ENCODE measurements at regions of chr3 and their contacts with region 1.

Region 1: DNA sequence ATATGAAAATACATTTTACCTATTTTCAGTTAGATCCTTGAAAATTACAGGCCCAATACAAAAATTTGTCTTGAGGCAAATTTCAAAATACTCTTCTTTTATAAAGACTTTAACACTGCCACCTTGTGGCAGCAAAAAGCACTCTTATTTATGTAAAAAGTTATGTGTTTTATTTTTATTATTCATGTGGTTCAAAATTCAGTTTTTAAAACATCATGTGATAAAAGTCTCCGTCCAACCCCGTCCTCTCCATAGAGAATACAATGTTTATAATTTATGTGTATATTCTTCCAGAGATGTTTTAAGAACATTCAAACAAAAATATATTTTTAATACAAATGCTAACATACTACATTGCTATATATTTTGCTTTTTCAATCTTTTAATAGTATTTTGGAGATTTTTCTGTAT is 36.9 kb upstream of the TRIM59 start:
- DNase-seq: peak; percentile 64
- H3K4me3 Mint-ChIP-seq: no peak overlapping the region
- H3K27ac Mint-ChIP-seq: no peak overlapping the region
- H3K4me1 Mint-ChIP-seq: peaks cover 6% of the 10 kb centered on the region
- H3K27me3 Mint-ChIP-seq: peaks cover 2% of the 10 kb centered on the region

Region 2: GRCh38 chr3:159884661-159885402 is 601.6 kb before region 1 on chr3:
- intact Hi-C with region 1: loop called (anchors 1 kb)
- DNase-seq: peak; percentile 62
- H3K4me3 Mint-ChIP-seq: no peak overlapping the region
- H3K27ac Mint-ChIP-seq: no peak overlapping the region
- H3K4me1 Mint-ChIP-seq: no peaks in the 10 kb centered on the region
- H3K27me3 Mint-ChIP-seq: peaks cover 25% of the 10 kb centered on the region

Region 3: GRCh38 chr3:160027541-160028195 is 458.8 kb before region 1 on chr3:
- intact Hi-C with region 1: loop called (anchors 2 kb)
- DNase-seq: peak; percentile 77
- H3K4me3 Mint-ChIP-seq: peak overlapping the region; percentile 27
- H3K27ac Mint-ChIP-seq: peak overlapping the region; percentile 92
- H3K4me1 Mint-ChIP-seq: peaks cover 22% of the 10 kb centered on the region
- H3K27me3 Mint-ChIP-seq: no peaks in the 10 kb centered on the region

Region 4: GRCh38 chr3:160163229-160163878 is 323.1 kb before region 1 on chr3:
- intact Hi-C with region 1: loop called (anchors 1 kb)
- DNase-seq: no peak
- H3K4me3 Mint-ChIP-seq: no peak overlapping the region
- H3K27ac Mint-ChIP-seq: no peak overlapping the region
- H3K4me1 Mint-ChIP-seq: no peaks in the 10 kb centered on the region
- H3K27me3 Mint-ChIP-seq: peaks cover 20% of the 10 kb centered on the region

Region 5: DNA sequence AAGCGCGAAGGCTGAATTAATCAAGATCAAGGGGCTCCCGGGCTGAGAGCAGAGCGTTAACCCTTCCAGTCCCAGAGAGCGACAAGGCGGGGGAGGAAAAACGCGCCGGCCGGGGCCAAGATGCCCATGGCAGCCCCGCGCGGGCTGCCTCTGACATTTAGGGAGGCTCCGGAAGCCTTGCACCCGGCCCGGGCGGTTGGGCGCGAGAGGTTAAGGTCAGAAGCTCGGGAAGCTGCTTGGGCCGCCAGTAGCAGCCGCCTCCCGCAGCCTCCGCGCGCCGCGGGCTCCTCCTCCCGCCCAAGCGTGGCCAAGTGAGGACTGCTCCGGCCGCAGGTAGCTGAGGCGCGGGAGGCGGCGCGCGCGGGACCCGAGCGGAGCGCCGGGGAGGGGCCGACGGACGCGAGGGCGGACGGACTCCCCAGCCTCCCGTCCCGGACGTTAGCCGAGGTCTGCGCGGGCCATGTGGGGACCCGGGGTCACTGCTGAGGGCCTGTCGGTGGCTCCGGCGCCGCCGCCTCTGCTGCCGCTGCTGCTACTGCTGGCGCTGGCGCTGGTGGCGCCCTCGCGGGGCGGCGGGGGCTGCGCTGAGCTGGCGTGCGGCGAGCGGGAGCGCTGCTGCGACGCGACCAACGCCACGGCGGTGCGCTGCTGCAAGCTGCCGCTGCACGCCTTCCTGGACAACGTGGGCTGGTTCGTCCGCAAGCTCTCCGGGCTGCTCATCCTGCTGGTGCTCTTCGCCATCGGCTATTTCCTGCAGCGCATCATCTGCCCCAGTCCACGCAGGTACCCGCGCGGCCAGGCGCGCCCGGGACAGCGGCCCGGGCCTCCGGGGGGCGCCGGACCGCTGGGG is 261.1 kb before region 1 on chr3 and contains the start of gene C3orf80:
- intact Hi-C with region 1: loop called (anchors 5 kb)
- DNase-seq: peak; percentile 85
- H3K4me3 Mint-ChIP-seq: peak within 1 kb of the TSS; percentile 84
- H3K27ac Mint-ChIP-seq: peak within 1 kb of the TSS; percentile 20
- H3K4me1 Mint-ChIP-seq: peaks cover 16% of the 10 kb centered on the region
- H3K27me3 Mint-ChIP-seq: peaks cover 61% of the 10 kb centered on the region
- total RNA-seq, gene C3orf80: 0.07 TPM in 1 of 2 replicates, not detected in the other

Region 6: GRCh38 chr3:160449636-160450598 is 36.5 kb before region 1 on chr3 and contains the start of gene TRIM59:
- intact Hi-C with region 1: loop called (anchors 1 kb)
- DNase-seq: peak; percentile 99
- H3K4me3 Mint-ChIP-seq: peak within 1 kb of the TSS; percentile 99
- H3K27ac Mint-ChIP-seq: peak within 1 kb of the TSS; percentile 100
- H3K4me1 Mint-ChIP-seq: peaks cover 29% of the 10 kb centered on the region
- H3K27me3 Mint-ChIP-seq: no peaks in the 10 kb centered on the region
- total RNA-seq, gene TRIM59: 31.8 and 35.0 TPM in 2 replicates

Region 7: GRCh38 chr3:160565442-160566403 is 79.3 kb after region 1 on chr3 and contains the start of gene KPNA4:
- intact Hi-C with region 1: loop called (anchors 5 kb)
- DNase-seq: peak; percentile 99
- H3K4me3 Mint-ChIP-seq: peak within 1 kb of the TSS; percentile 100
- H3K27ac Mint-ChIP-seq: peak within 1 kb of the TSS; percentile 100
- H3K4me1 Mint-ChIP-seq: peaks cover 52% of the 10 kb centered on the region
- H3K27me3 Mint-ChIP-seq: no peaks in the 10 kb centered on the region
- total RNA-seq, gene KPNA4: 72.5 and 75.9 TPM in 2 replicates

Region 8: DNA sequence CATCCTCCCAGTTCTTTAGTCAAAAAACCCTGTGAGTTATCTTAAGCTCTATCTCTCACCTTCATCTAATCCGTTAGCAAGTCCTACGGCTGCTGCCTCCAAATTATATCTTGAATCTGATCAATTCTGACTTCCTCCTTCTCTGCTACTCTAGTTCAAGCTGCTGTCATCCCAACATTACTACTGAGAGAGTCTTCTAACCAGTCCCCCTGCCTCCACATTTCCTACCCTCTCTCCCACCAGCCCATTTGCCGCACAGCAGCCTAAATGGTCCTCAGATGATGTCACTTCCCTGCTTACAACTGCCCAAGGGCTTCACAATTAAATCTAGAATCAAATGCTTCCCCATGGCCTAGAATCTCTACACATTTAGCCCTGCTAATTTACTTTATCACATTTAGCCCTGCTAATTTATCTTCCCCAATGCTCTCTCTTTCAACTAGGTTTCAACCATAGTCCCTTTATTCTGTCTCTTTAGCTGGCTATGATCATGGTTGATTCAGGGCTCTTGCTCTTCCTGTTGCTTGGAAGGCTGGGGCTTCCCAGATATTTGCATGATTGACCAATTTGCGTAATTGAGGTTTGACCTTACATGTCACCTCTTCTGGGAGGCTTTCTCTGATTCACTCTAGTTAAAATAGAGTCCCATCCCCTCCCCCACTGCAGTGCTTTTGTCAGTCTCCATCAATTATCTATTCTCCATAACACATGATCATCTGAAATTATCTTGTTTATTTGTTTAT is 179.5 kb after region 1 on chr3:
- intact Hi-C with region 1: no loop called
- DNase-seq: no peak
- H3K4me3 Mint-ChIP-seq: no peak overlapping the region
- H3K27ac Mint-ChIP-seq: peak overlapping the region; percentile 12
- H3K4me1 Mint-ChIP-seq: peaks cover 7% of the 10 kb centered on the region
- H3K27me3 Mint-ChIP-seq: peaks cover 5% of the 10 kb centered on the region

Measured in activated CD4-positive, alpha-beta T cell treated with anti-CD3 and anti-CD28 coated beads, Interleukin-2, amount 10 ng/mL, durations not matched to agents 24 days and 14 days (primary cell).